Activated CD4-positive, alpha-beta T cell treated with anti-CD3 and anti-CD28 coated beads for 36 hours (primary cell): ENCODE measurements at regions of chr22 and their contacts with region 1.

Region 1: GRCh38 chr22:24023204-24023789 is 12.2 kb downstream of the CABIN1 start:
- DNase-seq: no peak
- ATAC-seq: peak; percentile 68
- H3K4me3 Mint-ChIP-seq: no peak overlapping the region
- H3K27ac Mint-ChIP-seq: peak overlapping the region; percentile 74
- H3K4me1 Mint-ChIP-seq: peaks cover 55% of the 10 kb centered on the region
- H3K27me3 Mint-ChIP-seq: no peaks in the 10 kb centered on the region

Region 2: GRCh38 chr22:24011735-24012068 is 11.6 kb before region 1 on chr22:
- CTCF ChIA-PET with region 1: interaction called, 3 read pairs
- POLR2A ChIA-PET with region 1: no interaction called
- intact Hi-C with region 1: loop called in 1 of 2 experiments (anchors 1 kb)
- DNase-seq: no peak
- ATAC-seq: no peak
- H3K4me3 Mint-ChIP-seq: peak overlapping the region; percentile 92
- H3K27ac Mint-ChIP-seq: peak overlapping the region; percentile 94
- H3K4me1 Mint-ChIP-seq: peaks cover 27% of the 10 kb centered on the region
- H3K27me3 Mint-ChIP-seq: no peaks in the 10 kb centered on the region